PC-3 (cell line): ENCODE measurements at regions of chr1 and their contacts with region 1.

Region 1: DNA sequence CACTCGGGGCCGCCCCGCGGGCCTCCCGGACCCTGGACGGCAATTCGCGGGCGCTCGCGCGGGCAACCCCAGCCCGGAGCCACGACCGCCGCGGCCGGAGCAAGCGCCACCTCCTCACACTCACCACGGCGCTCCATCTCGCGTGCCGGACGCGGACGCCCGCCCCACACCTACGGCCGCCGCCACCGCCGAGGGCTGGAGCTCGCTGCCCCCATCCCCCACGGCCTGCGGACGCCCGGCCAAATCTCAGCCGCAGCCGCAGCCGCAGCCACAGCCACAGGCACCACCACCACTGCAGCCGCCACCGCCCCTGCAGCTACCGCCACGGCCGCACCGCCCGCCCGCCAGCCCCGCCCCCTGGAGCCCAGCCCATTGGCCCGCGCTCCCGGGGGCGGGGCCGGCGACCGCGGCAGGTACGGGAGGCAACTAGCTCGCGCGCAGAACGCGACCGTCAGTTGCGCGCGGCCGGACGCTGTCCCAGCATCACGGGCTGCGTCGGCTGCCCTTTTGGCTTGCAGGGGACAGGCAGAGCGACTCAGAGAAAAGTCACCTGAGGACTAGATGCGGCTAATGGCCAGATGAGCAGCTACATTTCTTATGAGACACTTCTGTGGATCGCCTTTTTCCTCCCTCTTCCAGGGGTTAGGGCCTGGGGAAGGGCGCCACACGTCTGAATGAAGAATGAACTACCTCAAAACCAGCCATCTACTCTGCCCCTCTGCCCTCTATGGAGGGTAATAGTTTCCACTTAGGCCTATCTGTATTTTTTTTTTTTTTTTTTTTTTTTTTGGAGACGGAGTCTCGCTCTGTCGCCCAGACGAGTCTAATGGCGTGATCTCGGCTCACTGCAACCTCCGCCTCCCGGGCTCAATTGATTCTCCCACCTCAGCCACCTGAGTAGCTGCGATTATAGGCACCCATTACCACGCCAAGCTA is at the start of gene ARHGAP29:
- DNase-seq: peak; percentile 94
- ATAC-seq: peak; percentile 72
- H3K4me3 ChIP-seq: peak within 1 kb of the TSS; percentile 96
- H3K27ac ChIP-seq: peak within 1 kb of the TSS; percentile 77
- H3K4me1 ChIP-seq: peaks cover 64% of the 10 kb centered on the region
- H3K27me3 ChIP-seq: no peaks in the 10 kb centered on the region
- CTCF ChIP-seq: no peak
- total RNA-seq, gene ARHGAP29: 161 and 166 TPM in 2 replicates

Region 2: DNA sequence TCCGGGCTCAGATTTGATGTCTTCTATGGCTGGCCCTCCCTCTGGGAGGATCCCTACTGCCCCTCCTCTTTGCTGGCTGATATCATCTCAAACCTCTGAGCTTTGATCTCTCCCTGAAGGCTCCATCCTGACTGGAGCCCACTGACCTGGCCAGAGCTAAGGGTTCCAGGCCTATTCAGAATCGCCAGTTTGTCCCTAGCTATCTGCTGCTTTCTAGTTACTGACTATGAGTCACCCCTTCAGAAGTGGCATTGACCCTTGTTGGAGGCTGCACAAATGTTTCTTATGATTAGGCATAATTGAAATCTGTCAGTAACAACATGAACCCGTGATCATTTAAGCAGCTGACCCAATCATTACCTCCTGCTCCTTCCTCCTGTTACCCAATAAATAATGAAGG is 203.7 kb before region 1 on chr1:
- CTCF ChIA-PET with region 1: no interaction called
- POLR2A ChIA-PET with region 1: no interaction called
- intact Hi-C with region 1: no loop called
- DNase-seq: no peak
- ATAC-seq: no peak
- H3K4me3 ChIP-seq: no peak overlapping the region
- H3K27ac ChIP-seq: no peak overlapping the region
- H3K4me1 ChIP-seq: peaks cover 28% of the 10 kb centered on the region
- H3K27me3 ChIP-seq: no peaks in the 10 kb centered on the region
- CTCF ChIP-seq: no peak

Region 3: DNA sequence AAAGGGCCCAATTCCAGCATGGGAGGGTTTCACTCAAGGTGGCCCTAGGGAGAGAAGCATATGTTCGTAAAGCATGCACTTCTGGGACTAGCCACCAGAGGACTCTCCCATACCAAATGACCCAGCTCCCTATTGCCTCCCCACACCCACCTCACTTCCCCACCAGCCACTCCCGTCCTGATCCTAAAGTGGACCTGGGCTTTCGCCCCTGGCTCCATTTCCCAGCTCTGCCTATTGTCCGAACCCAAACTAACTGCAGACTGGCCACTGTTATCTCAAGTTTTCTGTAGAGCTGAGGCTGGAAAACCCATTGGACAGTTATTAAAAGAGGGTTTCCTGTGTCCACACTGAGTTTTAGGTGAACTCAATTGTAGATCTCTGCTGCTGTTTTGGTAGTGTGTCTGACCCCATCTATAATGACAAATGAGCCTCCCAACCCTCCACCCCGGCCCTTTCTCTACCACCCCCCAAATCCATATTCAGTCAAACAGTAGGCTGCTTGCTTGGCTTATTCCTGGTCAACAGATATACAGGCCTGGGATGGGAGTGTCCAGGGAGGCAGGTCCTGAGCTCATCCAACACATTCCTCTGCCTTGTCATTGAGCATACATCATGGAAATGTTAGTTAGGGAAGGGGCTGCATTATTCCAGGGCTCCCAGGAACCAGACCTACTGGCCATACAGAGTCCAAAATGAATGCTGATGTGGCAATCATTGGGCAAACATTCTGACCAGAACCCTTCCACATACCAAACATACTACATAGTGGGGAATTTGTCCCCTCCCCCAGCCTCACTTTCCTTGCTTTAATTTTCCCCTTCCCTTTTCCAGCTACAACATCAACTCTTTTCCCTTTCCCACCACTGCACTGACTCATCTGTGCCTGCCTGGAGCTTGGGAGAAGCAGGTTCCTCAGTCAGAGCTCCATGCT is 175.8 kb before region 1 on chr1:
- CTCF ChIA-PET with region 1: no interaction called
- POLR2A ChIA-PET with region 1: no interaction called
- intact Hi-C with region 1: loop called (anchors 10 kb)
- DNase-seq: peak; percentile 77
- ATAC-seq: peak; percentile 89
- H3K4me3 ChIP-seq: no peak overlapping the region
- H3K27ac ChIP-seq: peak overlapping the region; percentile 42
- H3K4me1 ChIP-seq: peaks cover 37% of the 10 kb centered on the region
- H3K27me3 ChIP-seq: no peaks in the 10 kb centered on the region
- CTCF ChIP-seq: peak; percentile 92

Region 4: GRCh38 chr1:94169126-94169525 is 68.4 kb before region 1 on chr1:
- CTCF ChIA-PET with region 1: no interaction called
- POLR2A ChIA-PET with region 1: no interaction called
- intact Hi-C with region 1: no loop called
- DNase-seq: no peak
- ATAC-seq: no peak
- H3K4me3 ChIP-seq: no peak overlapping the region
- H3K27ac ChIP-seq: no peak overlapping the region
- H3K4me1 ChIP-seq: no peaks in the 10 kb centered on the region
- H3K27me3 ChIP-seq: no peaks in the 10 kb centered on the region
- CTCF ChIP-seq: no peak

Region 5: GRCh38 chr1:94281361-94282142 is 44.0 kb after region 1 on chr1:
- CTCF ChIA-PET with region 1: no interaction called
- POLR2A ChIA-PET with region 1: no interaction called
- intact Hi-C with region 1: no loop called
- DNase-seq: peak; percentile 17
- ATAC-seq: no peak
- H3K4me3 ChIP-seq: no peak overlapping the region
- H3K27ac ChIP-seq: peak overlapping the region; percentile 38
- H3K4me1 ChIP-seq: peaks cover 48% of the 10 kb centered on the region
- H3K27me3 ChIP-seq: no peaks in the 10 kb centered on the region
- CTCF ChIP-seq: no peak

Region 6: DNA sequence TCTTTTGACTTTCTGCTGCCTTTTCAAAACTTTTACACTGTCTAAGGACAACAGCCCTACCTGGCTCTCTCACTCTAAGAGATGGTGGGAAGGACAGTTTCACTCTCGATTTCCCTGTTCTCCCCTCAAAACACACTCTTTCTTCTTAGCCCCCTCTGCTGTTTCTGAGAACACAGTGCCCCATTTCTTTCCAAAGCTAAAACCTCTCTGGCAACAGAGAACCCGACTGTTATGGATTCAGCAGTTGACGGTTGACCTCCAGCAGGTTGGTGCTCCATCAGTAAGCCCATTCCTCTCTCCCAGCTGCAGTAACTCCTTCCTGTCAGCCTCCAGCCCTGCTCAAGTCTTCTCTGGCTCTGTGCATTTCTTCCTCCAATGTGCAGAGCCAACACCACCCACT is 92.4 kb after region 1 on chr1:
- CTCF ChIA-PET with region 1: interaction called, 4 read pairs
- POLR2A ChIA-PET with region 1: interaction called, 14 read pairs
- intact Hi-C with region 1: no loop called
- DNase-seq: peak; percentile 31
- ATAC-seq: no peak
- H3K4me3 ChIP-seq: no peak overlapping the region
- H3K27ac ChIP-seq: 0 out of 2 replicates have a peak overlapping the region, but pooled peaks have one; percentile 2
- H3K4me1 ChIP-seq: peaks cover 77% of the 10 kb centered on the region
- H3K27me3 ChIP-seq: no peaks in the 10 kb centered on the region
- CTCF ChIP-seq: peak; percentile 56

Region 7: DNA sequence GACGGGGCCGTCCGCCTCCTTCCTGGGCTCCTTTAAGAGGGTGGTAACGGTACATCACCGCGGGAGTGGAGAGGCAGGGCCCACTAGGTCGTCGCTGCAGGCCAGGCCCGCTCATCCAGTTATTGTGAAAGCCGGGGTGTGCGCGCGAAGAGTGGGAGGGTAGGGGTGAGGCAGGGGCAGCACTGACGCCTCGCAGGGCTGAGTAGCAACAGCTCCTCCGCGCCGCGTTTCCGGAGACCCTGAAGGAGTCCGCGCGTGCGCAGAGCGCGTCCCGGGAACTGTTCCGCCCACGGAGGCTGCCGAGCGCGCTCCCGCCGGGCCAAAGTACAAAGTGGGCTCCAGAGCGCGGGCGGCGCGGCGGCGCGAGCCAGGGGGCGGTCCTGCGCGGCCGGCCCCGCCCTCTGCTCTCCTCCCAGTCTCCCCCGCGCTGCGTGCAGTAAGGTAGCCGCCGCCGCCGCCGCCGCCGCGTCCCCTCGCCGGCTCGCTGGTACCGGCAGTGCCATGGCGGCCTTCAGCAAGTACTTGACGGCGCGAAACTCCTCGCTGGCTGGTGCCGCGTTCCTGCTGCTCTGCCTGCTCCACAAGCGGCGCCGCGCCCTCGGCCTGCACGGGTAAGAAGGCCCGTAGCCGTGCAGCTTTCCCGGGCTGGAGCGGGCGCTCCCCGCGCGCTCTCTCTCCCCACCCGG is 180.6 kb after region 1 on chr1 and contains the start of gene ABCD3:
- CTCF ChIA-PET with region 1: no interaction called
- POLR2A ChIA-PET with region 1: no interaction called
- intact Hi-C with region 1: loop called (anchors 10 kb)
- DNase-seq: peak; percentile 97
- ATAC-seq: peak; percentile 83
- H3K4me3 ChIP-seq: peak within 1 kb of the TSS; percentile 85
- H3K27ac ChIP-seq: peak within 1 kb of the TSS; percentile 38
- H3K4me1 ChIP-seq: peaks cover 40% of the 10 kb centered on the region
- H3K27me3 ChIP-seq: no peaks in the 10 kb centered on the region
- CTCF ChIP-seq: no peak
- total RNA-seq, gene ABCD3: 31.7 and 36.3 TPM in 2 replicates